GM12878 (cell line): ENCODE measurements at regions of chr11 and their contacts with region 1.

Region 1: DNA sequence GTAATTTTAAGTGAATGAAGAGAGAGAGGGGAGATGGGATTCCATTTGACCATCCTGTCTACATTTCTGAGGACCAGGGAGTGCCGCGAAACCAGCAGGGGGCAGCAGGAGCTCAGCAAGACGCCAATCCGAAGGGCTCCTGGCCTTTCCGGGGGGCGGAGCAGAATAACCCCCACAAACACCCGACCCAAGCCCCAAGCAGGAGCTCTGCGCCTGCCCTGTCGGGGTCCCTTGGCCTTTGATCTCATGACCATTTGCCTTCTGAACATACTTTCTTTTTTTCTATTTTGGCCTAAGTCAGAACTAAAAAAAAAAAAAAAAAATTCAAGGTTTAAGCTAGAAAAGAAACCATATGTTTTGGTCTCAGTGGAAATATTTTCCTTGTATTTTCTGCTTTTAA is 21.9 kb upstream of the SCN2B start:
- DNase-seq: no peak
- ATAC-seq: peak; percentile 94
- H3K4me3 ChIP-seq: no peak overlapping the region
- H3K27ac ChIP-seq: no peak overlapping the region
- H3K4me1 ChIP-seq: no peaks in the 10 kb centered on the region
- H3K27me3 ChIP-seq: no peaks in the 10 kb centered on the region; a peak in 1 of 4 replicates
- CTCF ChIP-seq: peak; percentile 93 to 96 (median 94)
- EP300 ChIP-seq: 0 out of 4 replicates have a peak, but pooled peaks of 1 of the 2 experiments have one; percentile 14
- POLR2A ChIP-seq: no peak
- RAD21 ChIP-seq: peak; percentile 97

Region 2: DNA sequence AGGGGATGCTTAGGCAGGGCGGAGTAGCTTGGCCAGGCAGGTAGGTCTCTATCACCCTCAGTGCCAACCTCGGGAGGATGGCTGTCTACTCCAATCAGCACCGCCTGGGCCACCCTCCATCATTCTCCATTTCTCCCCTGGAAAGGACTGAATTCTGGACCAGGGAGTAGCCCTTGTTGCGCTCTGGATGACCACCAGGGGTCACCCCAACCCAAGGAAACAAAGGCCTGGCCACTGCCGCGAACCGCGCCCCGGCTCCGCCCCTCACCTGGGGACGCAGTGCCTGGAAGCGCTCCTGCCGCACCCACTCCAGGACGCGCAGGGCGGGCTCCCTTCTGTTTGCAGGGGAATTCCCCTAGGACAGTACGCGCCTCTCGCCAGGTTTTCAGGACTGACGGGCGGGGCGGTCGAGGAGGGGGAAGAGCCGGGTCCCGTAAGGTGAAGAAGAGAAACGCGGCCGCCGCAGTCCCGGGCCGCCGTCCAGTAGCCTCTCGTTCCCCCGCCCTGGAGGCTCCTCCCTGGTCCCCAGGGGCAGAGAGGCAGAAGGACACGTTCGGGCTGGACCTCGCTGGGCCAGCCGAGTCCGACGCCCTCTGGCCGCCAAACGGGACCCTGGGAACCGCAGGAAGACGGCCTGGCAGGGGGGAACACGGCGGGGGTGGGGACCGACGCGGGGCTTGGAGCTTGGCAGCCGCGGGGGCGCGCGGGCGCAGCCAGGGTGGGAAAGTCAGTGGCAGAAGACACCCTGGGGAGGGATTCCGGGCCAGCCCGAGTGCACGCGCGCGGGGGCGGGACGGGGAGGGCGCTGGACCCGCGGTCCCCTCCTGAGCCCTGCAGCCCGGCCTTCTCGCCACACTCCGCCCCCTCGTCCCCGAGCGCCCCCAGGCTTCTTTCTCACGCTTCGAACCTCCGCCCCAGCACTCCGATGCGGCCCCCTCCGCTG is 52.8 kb before region 1 on chr11:
- CTCF ChIA-PET with region 1: interaction called, 11 read pairs
- POLR2A ChIA-PET with region 1: no interaction called
- RAD21 ChIA-PET with region 1: interaction called, 6 read pairs
- SMC1A ChIA-PET with region 1: interaction called, 3 read pairs
- in situ Hi-C with region 1: no loop called
- intact Hi-C with region 1: no loop called
- DNase-seq: peak; percentile 35
- ATAC-seq: peak; percentile 96
- H3K4me3 ChIP-seq: peak overlapping the region; percentile 73
- H3K27ac ChIP-seq: no peak overlapping the region
- H3K4me1 ChIP-seq: no peaks in the 10 kb centered on the region
- H3K27me3 ChIP-seq: peaks cover 5 to 10% of the 10 kb centered on the region in 2 experiments
- CTCF ChIP-seq: peak; percentile 82 to 90 (median 86)
- EP300 ChIP-seq: no peak
- POLR2A ChIP-seq: no peak
- RAD21 ChIP-seq: peak; percentile 83

Region 3: GRCh38 chr11:118156531-118157185 is 41.7 kb before region 1 on chr11:
- CTCF ChIA-PET with region 1: no interaction called
- POLR2A ChIA-PET with region 1: no interaction called
- RAD21 ChIA-PET with region 1: no interaction called
- SMC1A ChIA-PET with region 1: no interaction called
- in situ Hi-C with region 1: no loop called
- intact Hi-C with region 1: no loop called
- DNase-seq: no peak
- ATAC-seq: peak; percentile 44; the same call in 2 of the 3 replicates
- H3K4me3 ChIP-seq: no peak overlapping the region
- H3K27ac ChIP-seq: no peak overlapping the region
- H3K4me1 ChIP-seq: no peaks in the 10 kb centered on the region
- H3K27me3 ChIP-seq: peaks cover 26 to 29% of the 10 kb centered on the region in 2 experiments
- CTCF ChIP-seq: no peak
- EP300 ChIP-seq: no peak
- POLR2A ChIP-seq: no peak
- RAD21 ChIP-seq: no peak

Region 4: GRCh38 chr11:118216621-118217481 is 18.5 kb after region 1 on chr11:
- CTCF ChIA-PET with region 1: interaction called, 62 read pairs
- POLR2A ChIA-PET with region 1: interaction called, 7 read pairs
- RAD21 ChIA-PET with region 1: interaction called, 21 read pairs
- SMC1A ChIA-PET with region 1: interaction called, 57 read pairs
- in situ Hi-C with region 1: no loop called
- intact Hi-C with region 1: no loop called
- DNase-seq: no peak
- ATAC-seq: peak; percentile 82
- H3K4me3 ChIP-seq: peak overlapping the region; percentile 15; the same call in 1 of the 2 replicates
- H3K27ac ChIP-seq: peak overlapping the region; percentile 33; the same call in 1 of the 2 replicates
- H3K4me1 ChIP-seq: peaks cover 36% of the 10 kb centered on the region
- H3K27me3 ChIP-seq: no peaks in the 10 kb centered on the region
- CTCF ChIP-seq: peak in 1 of 3 experiments; percentile 17; a peak in 2 of 6 replicates
- EP300 ChIP-seq: peak in 1 of 2 experiments; percentile 64; a peak in 1 of 4 replicates
- POLR2A ChIP-seq: no peak
- RAD21 ChIP-seq: peak; percentile 34; the same call in 1 of the 2 replicates

Region 5: GRCh38 chr11:118247047-118247446 is 48.7 kb after region 1 on chr11:
- CTCF ChIA-PET with region 1: interaction called, 19 read pairs
- POLR2A ChIA-PET with region 1: interaction called, 5 read pairs
- RAD21 ChIA-PET with region 1: interaction called, 16 read pairs
- SMC1A ChIA-PET with region 1: interaction called, 42 read pairs
- in situ Hi-C with region 1: no loop called
- intact Hi-C with region 1: loop called (anchors 2 kb)
- DNase-seq: no peak
- ATAC-seq: peak; percentile 2; the same call in 1 of the 3 replicates
- H3K4me3 ChIP-seq: no peak overlapping the region
- H3K27ac ChIP-seq: no peak overlapping the region
- H3K4me1 ChIP-seq: peaks cover 7% of the 10 kb centered on the region; the same call in 1 of the 2 replicates
- H3K27me3 ChIP-seq: no peaks in the 10 kb centered on the region
- CTCF ChIP-seq: no peak; a peak in 1 of 6 replicates
- EP300 ChIP-seq: no peak
- POLR2A ChIP-seq: no peak
- RAD21 ChIP-seq: 0 out of 2 replicates have a peak, but pooled peaks have one; percentile 11

Region 6: GRCh38 chr11:118263695-118264567 is 65.6 kb after region 1 on chr11 and contains the start of gene MPZL2:
- CTCF ChIA-PET with region 1: interaction called, 39 read pairs
- POLR2A ChIA-PET with region 1: interaction called, 4 read pairs
- RAD21 ChIA-PET with region 1: interaction called, 16 read pairs
- SMC1A ChIA-PET with region 1: interaction called, 17 read pairs
- in situ Hi-C with region 1: no loop called
- intact Hi-C with region 1: loop called (anchors 1 kb)
- DNase-seq: no peak
- ATAC-seq: peak; percentile 70
- H3K4me3 ChIP-seq: no peak within 1 kb of the TSS
- H3K27ac ChIP-seq: no peak within 1 kb of the TSS
- H3K4me1 ChIP-seq: peaks cover 9% of the 10 kb centered on the region
- H3K27me3 ChIP-seq: peaks cover 0 to 13% of the 10 kb centered on the region in 2 experiments; a peak in 1 of 4 replicates
- CTCF ChIP-seq: no peak; a peak in 1 of 6 replicates
- EP300 ChIP-seq: no peak
- POLR2A ChIP-seq: no peak
- RAD21 ChIP-seq: no peak
- polyA plus RNA-seq, gene MPZL2: 4.2 to 4.5 TPM

Region 7: DNA sequence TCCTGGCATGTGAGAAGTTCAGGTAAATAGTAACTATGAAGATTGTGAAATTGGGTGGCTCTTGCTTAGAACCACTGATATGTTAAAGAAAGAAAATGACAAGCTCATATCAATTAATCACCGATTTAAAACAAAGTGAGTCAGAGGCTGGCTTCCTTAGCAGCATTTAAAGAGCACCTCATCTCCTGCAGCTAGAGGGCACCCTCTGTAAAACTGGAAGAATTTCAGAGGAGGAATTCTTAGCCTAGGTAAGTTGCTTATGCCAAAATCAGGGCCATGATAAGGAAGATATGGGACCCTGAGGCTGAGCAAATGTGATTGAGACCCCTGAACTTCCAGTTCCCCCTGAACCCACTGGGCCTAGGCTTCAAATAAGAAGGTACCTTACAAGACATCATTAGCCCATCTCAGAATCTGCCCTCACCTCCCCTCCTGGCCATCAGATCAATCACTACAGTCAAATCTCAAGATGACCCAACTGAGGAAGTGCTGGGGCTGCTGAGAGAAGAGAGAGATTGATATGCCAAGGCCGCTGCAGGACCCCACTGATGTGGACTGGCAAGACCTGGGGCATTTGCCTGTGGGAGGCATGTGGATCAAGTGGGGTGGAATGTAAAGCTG is 97.6 kb after region 1 on chr11:
- CTCF ChIA-PET with region 1: interaction called, 31 read pairs
- POLR2A ChIA-PET with region 1: interaction called, 5 read pairs
- RAD21 ChIA-PET with region 1: interaction called, 71 read pairs
- SMC1A ChIA-PET with region 1: interaction called, 77 read pairs
- in situ Hi-C with region 1: loop called (anchors 5 kb)
- intact Hi-C with region 1: loop called (anchors 1 kb)
- DNase-seq: no peak
- ATAC-seq: peak; percentile 88
- H3K4me3 ChIP-seq: no peak overlapping the region
- H3K27ac ChIP-seq: no peak overlapping the region
- H3K4me1 ChIP-seq: no peaks in the 10 kb centered on the region
- H3K27me3 ChIP-seq: no peaks in the 10 kb centered on the region; a peak in 1 of 4 replicates
- CTCF ChIP-seq: peak; percentile 60 to 64 (median 60); a peak in 5 of 6 replicates
- EP300 ChIP-seq: no peak
- POLR2A ChIP-seq: no peak
- RAD21 ChIP-seq: peak; percentile 66

Region 8: DNA sequence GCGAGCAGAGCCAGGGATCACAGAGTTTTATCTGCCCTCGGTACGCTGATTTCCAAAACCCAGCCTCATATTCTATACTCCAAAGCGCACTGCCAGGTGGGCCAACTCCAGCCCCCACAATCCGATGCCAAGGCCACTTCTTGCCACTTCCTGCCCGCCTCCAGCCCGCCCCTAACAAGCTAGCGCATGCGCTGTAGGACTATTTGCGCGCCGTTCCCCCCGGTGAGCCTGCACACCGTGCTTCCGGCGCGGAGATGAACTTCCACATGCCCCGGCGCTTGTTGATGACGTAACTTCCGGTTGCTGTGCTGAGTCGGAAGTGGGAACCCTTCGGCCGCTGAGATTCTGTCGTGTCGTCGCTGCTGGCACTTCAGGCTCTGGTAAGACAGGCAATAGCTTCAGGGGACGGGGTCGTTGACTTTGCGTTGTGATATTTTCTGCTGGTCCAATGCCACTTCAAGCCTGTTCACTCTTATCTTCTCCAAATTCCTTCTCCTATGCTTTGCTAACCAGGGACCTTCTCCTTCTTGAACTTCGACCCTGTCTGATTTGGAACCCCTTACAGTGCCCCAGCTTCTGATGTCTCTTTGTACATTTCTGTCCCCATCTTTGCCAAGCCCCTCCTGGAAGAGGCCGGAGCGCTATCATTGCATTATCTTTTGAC is 161.1 kb after region 1 on chr11 and contains the start of gene UBE4A:
- CTCF ChIA-PET with region 1: interaction called, 58 read pairs
- POLR2A ChIA-PET with region 1: interaction called, 8 read pairs
- RAD21 ChIA-PET with region 1: interaction called, 22 read pairs
- SMC1A ChIA-PET with region 1: interaction called, 10 read pairs
- in situ Hi-C with region 1: no loop called
- intact Hi-C with region 1: no loop called
- DNase-seq: peak; percentile 92
- ATAC-seq: peak; percentile 97
- H3K4me3 ChIP-seq: peak within 1 kb of the TSS; percentile 93
- H3K27ac ChIP-seq: peak within 1 kb of the TSS; percentile 76
- H3K4me1 ChIP-seq: peaks cover 7% of the 10 kb centered on the region; the same call in 1 of the 2 replicates
- H3K27me3 ChIP-seq: no peaks in the 10 kb centered on the region
- CTCF ChIP-seq: no peak
- EP300 ChIP-seq: peak in 1 of 2 experiments; percentile 56; a peak in 1 of 4 replicates
- POLR2A ChIP-seq: peak; percentile 97
- RAD21 ChIP-seq: no peak
- polyA plus RNA-seq, gene UBE4A: 6.2 to 13.9 TPM

Region 9: GRCh38 chr11:118610804-118611795 is 412.7 kb after region 1 on chr11:
- CTCF ChIA-PET with region 1: no interaction called
- POLR2A ChIA-PET with region 1: no interaction called
- RAD21 ChIA-PET with region 1: no interaction called
- SMC1A ChIA-PET with region 1: no interaction called
- in situ Hi-C with region 1: no loop called
- intact Hi-C with region 1: no loop called
- DNase-seq: no peak
- ATAC-seq: peak; percentile 84
- H3K4me3 ChIP-seq: no peak overlapping the region; the same call in 1 of the 2 replicates
- H3K27ac ChIP-seq: no peak overlapping the region
- H3K4me1 ChIP-seq: peaks cover 8% of the 10 kb centered on the region
- H3K27me3 ChIP-seq: peaks cover 22 to 36% of the 10 kb centered on the region in 2 experiments; a peak in 3 of 4 replicates
- CTCF ChIP-seq: peak; percentile 72 to 88 (median 87); a peak in 5 of 6 replicates
- EP300 ChIP-seq: no peak
- POLR2A ChIP-seq: no peak
- RAD21 ChIP-seq: peak; percentile 46

Region 10: DNA sequence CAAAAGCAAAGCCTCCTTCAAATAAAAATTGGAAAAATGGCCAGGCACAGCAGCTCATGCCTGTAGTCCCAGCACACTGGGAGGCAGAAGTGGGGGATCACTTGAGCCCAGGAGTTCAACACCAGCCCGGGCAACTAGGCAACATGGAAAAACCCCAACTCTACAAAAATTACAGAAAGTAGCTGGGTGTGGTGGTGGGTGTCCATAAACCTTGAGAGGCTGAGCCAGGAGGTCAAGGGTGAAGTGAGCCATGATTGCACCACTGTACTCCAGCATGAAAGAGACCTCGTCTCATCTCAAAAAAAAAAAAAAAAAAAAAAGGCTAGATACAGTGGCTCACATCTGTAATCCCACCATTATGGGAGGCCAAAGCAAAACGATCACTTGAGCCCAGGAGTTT is 570.3 kb after region 1 on chr11:
- CTCF ChIA-PET with region 1: no interaction called
- POLR2A ChIA-PET with region 1: no interaction called
- RAD21 ChIA-PET with region 1: no interaction called
- SMC1A ChIA-PET with region 1: no interaction called
- in situ Hi-C with region 1: no loop called
- intact Hi-C with region 1: no loop called
- DNase-seq: no peak
- ATAC-seq: no peak
- H3K4me3 ChIP-seq: no peak overlapping the region
- H3K27ac ChIP-seq: no peak overlapping the region
- H3K4me1 ChIP-seq: no peaks in the 10 kb centered on the region; the same call in 1 of the 2 replicates
- H3K27me3 ChIP-seq: no peaks in the 10 kb centered on the region
- CTCF ChIP-seq: no peak
- EP300 ChIP-seq: no peak
- POLR2A ChIP-seq: no peak
- RAD21 ChIP-seq: no peak